Gastrocnemius medialis (tissue), 4 donors: ENCODE measurements at regions of chr17 and their contacts with region 1.

Region 1: DNA sequence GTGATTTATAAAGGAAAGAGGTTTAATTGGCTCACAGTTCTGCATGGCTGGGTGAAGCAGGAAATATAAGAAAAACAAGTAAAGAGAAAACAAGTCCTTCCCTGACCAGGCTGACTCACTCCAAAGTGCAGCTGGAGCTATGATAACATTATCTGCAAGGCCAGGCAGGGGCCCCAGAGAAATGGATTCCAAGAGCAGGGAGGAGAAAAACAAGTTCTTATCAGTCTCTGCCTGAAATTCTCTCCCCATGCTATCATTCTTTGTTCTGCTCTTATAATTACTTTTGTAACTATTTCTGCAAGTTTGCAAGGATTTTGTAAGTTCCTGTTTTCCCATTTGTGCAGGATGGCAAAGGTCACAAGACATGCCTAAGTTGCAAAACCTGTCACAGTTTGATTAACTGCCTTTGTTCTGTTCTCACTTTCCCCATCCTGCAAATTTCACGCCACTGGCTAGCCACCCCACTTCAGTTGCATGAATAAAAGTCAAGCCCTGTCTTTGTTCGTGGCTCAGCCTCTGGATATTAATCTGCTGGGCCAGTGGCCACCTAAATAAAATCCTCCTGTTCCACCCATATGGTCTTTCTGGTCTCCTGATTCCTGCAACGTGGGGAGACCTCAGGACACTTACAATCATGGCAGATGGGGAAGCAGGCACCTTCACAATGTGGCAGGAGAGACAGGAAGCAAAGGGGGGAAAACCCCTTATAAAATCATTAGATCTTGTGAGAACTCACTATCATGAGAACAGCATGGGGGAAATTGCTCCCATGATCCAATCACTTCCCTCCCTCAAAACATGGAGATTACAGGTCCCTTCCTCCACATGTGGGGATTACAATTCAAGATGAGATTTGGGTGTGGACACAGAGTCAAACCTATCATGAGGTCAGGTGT is 13.1 kb downstream of the ABCA9 start:
- DNase-seq: peak; percentile 26 to 48
- ATAC-seq: peak; percentile 36 to 49
- H3K4me3 ChIP-seq: no peak overlapping the region
- H3K27ac ChIP-seq: peak overlapping the region in 2 of 4 donors; percentile 33 to 39
- H3K4me1 ChIP-seq: no peaks in the 10 kb centered on the region
- H3K27me3 ChIP-seq: no peaks in the 10 kb centered on the region
- CTCF ChIP-seq: no peak
- POLR2A ChIP-seq: no peak

Region 2: DNA sequence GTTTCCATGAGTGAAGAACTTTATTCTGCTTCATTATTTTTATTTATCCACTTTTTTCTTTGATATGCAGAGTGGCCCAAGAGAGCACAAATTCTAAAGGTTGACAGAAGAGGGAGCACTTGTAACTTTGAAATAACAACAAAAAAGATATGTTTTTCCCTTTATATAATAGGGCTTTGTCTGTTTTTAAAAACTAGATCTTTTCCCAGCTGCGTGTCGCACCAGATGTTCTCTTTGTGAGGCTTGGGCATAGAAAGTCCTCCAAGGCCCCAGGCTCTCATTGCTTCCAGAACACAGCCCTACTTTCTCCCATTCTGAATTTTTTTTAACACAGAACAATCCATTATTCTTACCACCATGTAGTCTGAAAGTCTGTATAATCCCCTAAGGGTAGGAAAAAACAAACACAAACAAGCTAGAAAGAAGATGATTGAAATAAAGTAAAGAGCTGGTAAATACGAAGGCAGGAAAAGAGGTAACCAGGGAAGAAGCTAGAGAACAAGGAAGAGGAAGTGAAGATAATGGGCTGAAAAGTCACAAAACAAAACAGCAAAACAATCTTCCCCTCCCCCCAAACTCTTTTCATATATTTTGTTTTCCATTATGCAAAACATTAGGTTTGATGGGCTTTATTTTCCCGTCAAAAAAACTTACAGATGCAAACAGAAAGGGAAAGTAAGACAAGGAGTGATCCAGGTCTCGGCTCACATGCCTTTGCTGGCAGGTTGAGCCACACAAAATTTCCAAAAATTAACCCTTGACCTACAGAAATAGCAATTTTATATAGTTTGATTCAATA is 252.8 kb before region 1 on chr17:
- in situ Hi-C with region 1: loop called in 1 of 4 experiments (anchors 10 kb)
- intact Hi-C with region 1: no loop called
- DNase-seq: no peak
- ATAC-seq: peak; percentile 32 to 46
- H3K4me3 ChIP-seq: peak overlapping the region in 2 of 4 donors; percentile 17 to 24
- H3K27ac ChIP-seq: peak overlapping the region; percentile 52 to 71 (median 68)
- H3K4me1 ChIP-seq: peaks cover 0 to 24% of the 10 kb centered on the region in 2 donors
- H3K27me3 ChIP-seq: no peaks in the 10 kb centered on the region
- CTCF ChIP-seq: no peak
- POLR2A ChIP-seq: no peak

Region 3: GRCh38 chr17:69141431-69142174 is 94.0 kb after region 1 on chr17 and contains the start of gene ABCA6:
- in situ Hi-C with region 1: no loop called
- intact Hi-C with region 1: no loop called
- DNase-seq: no peak
- ATAC-seq: peak in 1 of 2 donors; percentile 81
- H3K4me3 ChIP-seq: peak within 1 kb of the TSS; percentile 27 to 42 (median 32)
- H3K27ac ChIP-seq: peak within 1 kb of the TSS; percentile 40 to 71 (median 44)
- H3K4me1 ChIP-seq: peaks cover 0 to 7% of the 10 kb centered on the region in 2 donors
- H3K27me3 ChIP-seq: no peaks in the 10 kb centered on the region
- CTCF ChIP-seq: no peak
- POLR2A ChIP-seq: peak in 1 of 2 donors; percentile 40
- total RNA-seq, gene ABCA6: 12.8 to 82.3 (median 15.7) TPM